GM12878 (cell line): ENCODE measurements at regions of chr18 and their contacts with region 1.

Region 1: GRCh38 chr18:54224379-54225014 is at the start of gene MBD2:
- DNase-seq: peak; percentile 76
- ATAC-seq: peak; percentile 84
- H3K4me3 ChIP-seq: peak within 1 kb of the TSS; percentile 77
- H3K27ac ChIP-seq: peak within 1 kb of the TSS; percentile 88
- H3K4me1 ChIP-seq: no peaks in the 10 kb centered on the region
- H3K27me3 ChIP-seq: no peaks in the 10 kb centered on the region
- CTCF ChIP-seq: peak; percentile 10 to 39 (median 23); a peak in 1 of 6 replicates
- EP300 ChIP-seq: no peak
- POLR2A ChIP-seq: peak; percentile 72
- RAD21 ChIP-seq: peak; percentile 49; the same call in 1 of the 2 replicates
- polyA plus RNA-seq, gene MBD2: 27.0 to 53.5 TPM

Region 2: GRCh38 chr18:54209471-54210180 is 14.9 kb before region 1 on chr18:
- CTCF ChIA-PET with region 1: interaction called, 37 read pairs
- POLR2A ChIA-PET with region 1: interaction called, 34 read pairs
- RAD21 ChIA-PET with region 1: interaction called, 123 read pairs
- SMC1A ChIA-PET with region 1: interaction called, 141 read pairs
- in situ Hi-C with region 1: no loop called
- intact Hi-C with region 1: loop called (anchors 1 kb)
- DNase-seq: peak; percentile 61
- ATAC-seq: peak; percentile 83
- H3K4me3 ChIP-seq: peak overlapping the region; percentile 64
- H3K27ac ChIP-seq: peak overlapping the region; percentile 98
- H3K4me1 ChIP-seq: peaks cover 32% of the 10 kb centered on the region
- H3K27me3 ChIP-seq: no peaks in the 10 kb centered on the region
- CTCF ChIP-seq: no peak
- EP300 ChIP-seq: peak; percentile 94 to 97
- POLR2A ChIP-seq: no peak
- RAD21 ChIP-seq: no peak

Region 3: GRCh38 chr18:54261894-54262293 is 37.4 kb after region 1 on chr18:
- CTCF ChIA-PET with region 1: interaction called, 17 read pairs
- POLR2A ChIA-PET with region 1: interaction called, 7 read pairs
- RAD21 ChIA-PET with region 1: interaction called, 54 read pairs
- SMC1A ChIA-PET with region 1: interaction called, 219 read pairs
- in situ Hi-C with region 1: loop called (anchors 5 kb)
- intact Hi-C with region 1: loop called (anchors 1 kb)
- DNase-seq: peak; percentile 85
- ATAC-seq: peak; percentile 80
- H3K4me3 ChIP-seq: peak overlapping the region; percentile 44; the same call in 1 of the 2 replicates
- H3K27ac ChIP-seq: peak overlapping the region; percentile 94
- H3K4me1 ChIP-seq: peaks cover 49% of the 10 kb centered on the region
- H3K27me3 ChIP-seq: no peaks in the 10 kb centered on the region
- CTCF ChIP-seq: no peak
- EP300 ChIP-seq: peak; percentile 22 to 67; a peak in 2 of 4 replicates
- POLR2A ChIP-seq: no peak
- RAD21 ChIP-seq: 0 out of 2 replicates have a peak, but pooled peaks have one; percentile 11

Region 4: DNA sequence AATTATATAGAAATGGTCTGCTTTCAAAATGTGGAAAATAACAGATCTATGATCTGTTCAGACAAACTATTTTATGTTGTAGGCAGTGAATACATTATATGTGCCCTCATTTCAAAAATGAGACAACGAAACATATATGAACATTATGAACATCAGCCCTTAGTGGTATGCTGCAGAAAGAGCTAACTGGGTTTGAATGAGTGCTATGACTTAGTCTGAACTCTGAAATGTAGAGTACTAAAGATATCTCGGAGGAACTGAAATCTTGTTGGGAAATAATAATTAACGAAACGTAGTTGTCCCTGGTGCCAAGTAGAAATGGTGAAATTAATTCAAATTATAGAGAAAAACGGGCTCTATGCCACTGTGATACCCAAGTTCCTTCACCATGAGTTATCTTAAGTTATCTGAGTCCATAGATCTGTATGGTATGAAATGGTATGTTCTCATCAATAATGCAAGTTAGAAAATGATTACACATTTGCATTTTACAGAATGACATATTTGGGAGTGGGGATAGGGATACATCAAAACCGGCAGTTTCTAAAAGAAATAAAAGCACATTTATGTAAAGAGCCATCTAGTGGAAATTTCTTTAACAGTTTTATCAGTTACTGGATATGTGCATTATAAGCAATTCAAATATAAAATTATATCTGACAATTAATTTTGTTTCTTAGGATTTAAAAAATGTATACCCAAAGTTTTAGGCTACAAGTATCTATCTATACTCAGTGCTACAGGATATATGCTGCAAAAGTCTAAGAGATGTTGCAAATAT is 106.5 kb after region 1 on chr18:
- CTCF ChIA-PET with region 1: interaction called, 7 read pairs
- POLR2A ChIA-PET with region 1: no interaction called
- RAD21 ChIA-PET with region 1: interaction called, 4 read pairs
- SMC1A ChIA-PET with region 1: interaction called, 11 read pairs
- in situ Hi-C with region 1: no loop called
- intact Hi-C with region 1: loop called (anchors 1 kb)
- DNase-seq: no peak
- ATAC-seq: peak; percentile 42; the same call in 2 of the 3 replicates
- H3K4me3 ChIP-seq: no peak overlapping the region
- H3K27ac ChIP-seq: no peak overlapping the region
- H3K4me1 ChIP-seq: no peaks in the 10 kb centered on the region
- H3K27me3 ChIP-seq: no peaks in the 10 kb centered on the region
- CTCF ChIP-seq: no peak; a peak in 1 of 6 replicates
- EP300 ChIP-seq: no peak
- POLR2A ChIP-seq: no peak
- RAD21 ChIP-seq: no peak

Region 5: GRCh38 chr18:54392543-54393023 is 168.1 kb after region 1 on chr18:
- CTCF ChIA-PET with region 1: interaction called, 5 read pairs
- POLR2A ChIA-PET with region 1: no interaction called
- RAD21 ChIA-PET with region 1: interaction called, 4 read pairs
- SMC1A ChIA-PET with region 1: interaction called, 6 read pairs
- in situ Hi-C with region 1: no loop called
- intact Hi-C with region 1: loop called (anchors 1 kb)
- DNase-seq: no peak
- ATAC-seq: peak; percentile 76
- H3K4me3 ChIP-seq: no peak overlapping the region
- H3K27ac ChIP-seq: no peak overlapping the region
- H3K4me1 ChIP-seq: peaks cover 13% of the 10 kb centered on the region
- H3K27me3 ChIP-seq: no peaks in the 10 kb centered on the region
- CTCF ChIP-seq: peak; percentile 54 to 76 (median 76)
- EP300 ChIP-seq: no peak
- POLR2A ChIP-seq: no peak
- RAD21 ChIP-seq: peak; percentile 68

Region 6: DNA sequence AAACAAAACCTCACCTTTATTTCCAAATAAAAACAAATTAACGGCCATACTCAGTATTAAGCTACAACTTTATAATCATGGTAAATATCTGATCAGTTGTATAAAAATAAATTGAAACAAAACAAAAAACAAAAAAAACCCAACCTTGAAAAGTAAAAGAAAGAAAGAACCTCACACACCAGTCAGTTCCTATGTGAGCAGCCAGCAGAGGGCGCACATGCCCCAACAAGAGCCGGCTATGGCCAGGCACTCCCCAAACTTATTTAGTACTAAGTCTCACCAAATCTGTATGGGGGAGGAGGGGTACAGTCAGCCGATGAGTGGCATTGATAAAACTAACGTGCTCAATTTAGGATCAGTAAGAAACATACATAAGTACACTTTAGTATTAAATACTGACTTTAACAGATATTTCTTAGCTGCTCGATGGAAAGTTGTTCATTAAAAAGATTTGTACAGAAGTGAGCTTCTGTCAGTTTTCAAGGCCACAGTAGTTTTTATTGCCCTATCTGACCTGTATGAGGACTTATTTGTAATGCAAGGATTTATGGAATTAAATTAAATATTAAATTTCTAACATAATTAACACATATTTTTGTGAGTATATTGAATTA is 1190.9 kb after region 1 on chr18:
- CTCF ChIA-PET with region 1: no interaction called
- POLR2A ChIA-PET with region 1: no interaction called
- RAD21 ChIA-PET with region 1: no interaction called
- SMC1A ChIA-PET with region 1: no interaction called
- in situ Hi-C with region 1: no loop called
- intact Hi-C with region 1: no loop called
- DNase-seq: peak; percentile 9
- ATAC-seq: peak; percentile 99
- H3K4me3 ChIP-seq: no peak overlapping the region
- H3K27ac ChIP-seq: no peak overlapping the region
- H3K4me1 ChIP-seq: peaks cover 1% of the 10 kb centered on the region; the same call in 1 of the 2 replicates
- H3K27me3 ChIP-seq: no peaks in the 10 kb centered on the region
- CTCF ChIP-seq: peak; percentile 83 to 87 (median 85)
- EP300 ChIP-seq: no peak
- POLR2A ChIP-seq: no peak
- RAD21 ChIP-seq: peak; percentile 94